A673 (cell line): ENCODE measurements at regions of chr11 and their contacts with region 1.

Region 1: GRCh38 chr11:131748151-131749050 is 378.0 kb downstream of the NTM start:
- DNase-seq: peak; percentile 83
- H3K4me3 ChIP-seq: no peak overlapping the region
- H3K27ac ChIP-seq: peak overlapping the region; percentile 51
- H3K4me1 ChIP-seq: peaks cover 25% of the 10 kb centered on the region
- H3K27me3 ChIP-seq: no peaks in the 10 kb centered on the region
- CTCF ChIP-seq: peak; percentile 93

Region 2: DNA sequence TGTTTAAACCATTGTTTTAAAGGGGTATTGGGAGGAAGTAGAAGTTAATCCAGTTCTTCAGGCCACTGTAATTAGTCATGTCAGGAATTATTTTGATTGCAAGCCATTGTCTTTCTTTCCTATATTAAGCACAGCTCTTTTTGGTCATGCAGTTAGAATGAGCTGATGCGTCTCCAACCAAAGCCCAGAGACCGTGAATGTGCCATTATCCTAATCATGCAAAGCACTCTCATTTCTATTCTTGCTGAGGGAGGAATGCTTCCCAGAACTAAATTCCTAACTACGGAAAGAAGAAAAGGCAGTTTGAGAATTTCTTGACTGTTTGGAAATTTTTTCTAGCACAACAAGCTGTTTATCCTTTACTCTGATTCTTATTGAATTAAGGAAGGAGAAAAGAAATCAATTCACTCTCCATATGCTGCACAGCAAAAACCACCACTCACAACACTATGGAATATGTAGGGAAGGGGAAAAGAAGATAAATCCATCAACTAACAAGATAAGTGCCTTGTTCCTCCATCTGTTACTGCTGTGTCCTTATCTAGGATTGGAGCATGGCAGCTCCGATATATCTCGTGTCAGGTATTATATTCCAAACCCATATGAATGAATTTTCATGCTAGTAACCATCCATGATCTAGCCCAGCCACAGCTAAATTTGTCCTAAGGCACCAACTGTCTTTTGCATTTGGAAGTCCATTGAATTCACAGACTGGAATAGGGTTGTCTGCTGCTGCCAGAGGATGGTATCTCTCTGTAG is 307.2 kb before region 1 on chr11:
- CTCF ChIA-PET with region 1: interaction called, 14 read pairs
- POLR2A ChIA-PET with region 1: no interaction called
- intact Hi-C with region 1: no loop called
- DNase-seq: no peak
- H3K4me3 ChIP-seq: no peak overlapping the region
- H3K27ac ChIP-seq: no peak overlapping the region
- H3K4me1 ChIP-seq: no peaks in the 10 kb centered on the region
- H3K27me3 ChIP-seq: peaks cover 22% of the 10 kb centered on the region
- CTCF ChIP-seq: no peak

Region 3: GRCh38 chr11:131867457-131868257 is 119.3 kb after region 1 on chr11:
- CTCF ChIA-PET with region 1: no interaction called
- POLR2A ChIA-PET with region 1: no interaction called
- intact Hi-C with region 1: loop called (anchors 5 kb)
- DNase-seq: peak; percentile 91
- H3K4me3 ChIP-seq: no peak overlapping the region
- H3K27ac ChIP-seq: peak overlapping the region; percentile 43
- H3K4me1 ChIP-seq: peaks cover 35% of the 10 kb centered on the region
- H3K27me3 ChIP-seq: no peaks in the 10 kb centered on the region
- CTCF ChIP-seq: peak; percentile 91

Region 4: DNA sequence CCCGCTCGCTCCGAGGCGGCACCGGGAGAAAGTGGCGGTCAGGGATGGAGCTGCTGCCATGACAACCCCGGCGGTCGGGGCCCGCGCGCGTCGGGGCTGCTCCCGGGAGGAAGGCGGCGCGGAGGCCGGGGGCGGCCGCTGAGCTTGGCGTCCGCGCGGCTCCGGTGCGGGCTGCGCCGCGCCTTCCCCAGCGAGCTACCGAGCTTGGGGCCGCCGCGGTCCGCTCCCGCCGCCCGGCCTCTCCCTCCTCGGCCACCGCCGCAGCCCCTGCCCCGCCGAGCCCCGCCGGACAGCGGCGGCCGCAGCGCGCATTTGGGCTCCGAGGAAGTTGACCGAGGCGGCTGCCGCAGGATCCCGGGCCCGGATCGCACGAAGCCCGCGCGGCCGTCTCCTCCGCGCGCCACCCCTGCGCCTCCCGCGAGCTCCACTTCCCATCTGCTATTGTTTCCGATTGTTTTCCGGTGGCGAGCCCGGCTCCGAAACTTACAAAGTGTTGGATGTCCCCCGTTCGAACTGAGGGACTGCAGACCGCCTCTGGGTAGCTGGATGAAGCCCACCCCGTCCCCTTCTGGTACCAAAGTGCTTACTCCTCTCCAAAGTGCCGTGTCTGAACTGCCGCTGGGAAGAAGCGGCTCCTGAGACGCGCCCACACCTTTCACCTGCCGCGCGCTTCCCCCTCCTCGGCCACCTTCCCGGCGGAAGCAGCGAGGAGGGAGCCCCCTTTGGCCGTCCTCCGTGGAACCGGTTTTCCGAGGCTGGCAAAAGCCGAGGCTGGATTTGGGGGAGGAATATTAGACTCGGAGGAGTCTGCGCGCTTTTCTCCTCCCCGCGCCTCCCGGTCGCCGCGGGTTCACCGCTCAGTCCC is 162.4 kb after region 1 on chr11:
- CTCF ChIA-PET with region 1: interaction called, 6 read pairs
- POLR2A ChIA-PET with region 1: no interaction called
- intact Hi-C with region 1: loop called (anchors 2 kb)
- DNase-seq: peak; percentile 56
- H3K4me3 ChIP-seq: peak overlapping the region; percentile 62
- H3K27ac ChIP-seq: peak overlapping the region; percentile 91
- H3K4me1 ChIP-seq: peaks cover 71% of the 10 kb centered on the region
- H3K27me3 ChIP-seq: no peaks in the 10 kb centered on the region
- CTCF ChIP-seq: no peak

Region 5: GRCh38 chr11:131977231-131977630 is 228.8 kb after region 1 on chr11:
- CTCF ChIA-PET with region 1: no interaction called
- POLR2A ChIA-PET with region 1: no interaction called
- intact Hi-C with region 1: loop called (anchors 5 kb)
- DNase-seq: peak; percentile 91
- H3K4me3 ChIP-seq: no peak overlapping the region
- H3K27ac ChIP-seq: peak overlapping the region; percentile 89
- H3K4me1 ChIP-seq: peaks cover 77% of the 10 kb centered on the region
- H3K27me3 ChIP-seq: no peaks in the 10 kb centered on the region
- CTCF ChIP-seq: no peak

Region 6: DNA sequence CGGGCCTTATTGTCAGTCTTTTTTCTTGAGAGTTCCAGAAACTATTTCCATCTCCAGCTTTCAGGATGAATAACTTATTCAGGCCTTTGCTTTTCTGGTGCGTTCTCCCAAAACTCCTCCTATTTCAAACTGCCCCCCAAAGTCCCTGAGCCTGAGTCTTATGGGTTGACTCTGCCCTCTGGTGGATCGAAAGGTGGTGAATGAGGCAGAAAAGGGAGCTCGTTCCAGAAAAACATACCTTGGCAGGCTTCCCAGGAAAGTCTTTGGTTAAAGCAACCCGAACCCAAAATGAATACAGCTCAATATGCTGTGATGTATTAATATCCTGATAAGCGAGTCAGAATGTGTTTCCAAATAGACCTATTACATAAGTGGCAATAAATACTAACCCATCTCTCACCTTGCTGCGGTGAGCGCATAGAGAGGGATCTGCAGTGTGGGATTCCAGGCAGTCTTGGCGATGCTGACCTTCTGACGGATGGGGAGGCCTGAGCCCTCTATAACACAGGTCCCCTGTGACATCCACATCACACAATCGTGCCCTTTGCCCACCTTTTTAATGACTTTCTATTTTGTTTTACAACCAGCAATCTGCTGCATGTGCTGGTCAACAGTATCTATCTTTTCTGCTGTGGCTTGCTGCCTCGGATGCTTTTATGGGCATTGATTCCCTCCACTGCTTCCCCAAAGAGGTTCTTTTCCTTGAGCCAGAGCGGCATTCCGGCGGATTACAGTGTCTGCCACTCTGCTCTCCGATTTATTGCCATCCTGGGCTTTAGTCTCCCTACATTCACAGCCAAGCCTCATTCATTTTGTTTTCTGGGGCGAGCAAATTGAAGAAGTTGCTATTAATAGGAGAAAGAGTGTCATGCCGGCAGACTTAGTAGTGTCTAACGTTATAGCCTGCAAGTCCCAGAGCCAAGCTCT is 378.8 kb after region 1 on chr11:
- CTCF ChIA-PET with region 1: interaction called, 3 read pairs
- POLR2A ChIA-PET with region 1: no interaction called
- intact Hi-C with region 1: loop called (anchors 1 kb)
- DNase-seq: peak; percentile 90
- H3K4me3 ChIP-seq: no peak overlapping the region
- H3K27ac ChIP-seq: peak overlapping the region; percentile 72
- H3K4me1 ChIP-seq: peaks cover 21% of the 10 kb centered on the region
- H3K27me3 ChIP-seq: no peaks in the 10 kb centered on the region
- CTCF ChIP-seq: peak; percentile 78

Region 7: DNA sequence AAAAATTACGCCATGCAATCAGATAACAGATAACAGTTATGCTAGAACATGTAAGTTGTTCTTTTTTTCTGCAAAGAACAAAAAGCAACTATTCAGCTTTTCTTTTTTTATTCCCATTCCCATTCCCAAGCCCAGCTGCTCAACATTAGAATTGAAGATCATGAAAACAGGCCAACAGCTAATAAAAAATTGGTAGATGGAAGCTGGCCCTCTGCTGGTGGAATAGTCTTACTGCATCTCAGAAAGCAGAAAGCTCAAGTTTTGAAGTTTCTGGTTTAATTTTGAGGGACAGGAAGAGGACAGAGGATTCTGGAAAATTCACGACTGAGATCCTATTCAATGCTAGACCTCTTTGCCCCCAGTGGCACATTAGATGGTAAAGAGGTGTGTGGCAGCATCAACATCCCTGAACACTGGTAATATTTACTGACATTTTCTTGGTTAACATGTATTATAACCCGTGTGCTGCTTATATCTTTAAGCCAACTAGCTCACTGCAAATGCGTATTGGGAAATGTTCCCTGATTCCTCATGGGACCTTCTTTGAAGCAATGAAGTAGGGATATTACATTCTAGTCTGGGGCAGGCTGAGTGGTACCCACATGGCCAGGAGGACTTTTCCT is 1192.7 kb after region 1 on chr11:
- CTCF ChIA-PET with region 1: interaction called, 3 read pairs
- POLR2A ChIA-PET with region 1: no interaction called
- intact Hi-C with region 1: loop called (anchors 5 kb)
- DNase-seq: peak; percentile 60
- H3K4me3 ChIP-seq: no peak overlapping the region
- H3K27ac ChIP-seq: no peak overlapping the region
- H3K4me1 ChIP-seq: peaks cover 5% of the 10 kb centered on the region
- H3K27me3 ChIP-seq: peaks cover 27% of the 10 kb centered on the region
- CTCF ChIP-seq: peak; percentile 90